Activated T-helper 1 cell treated with anti-CD3 and anti-CD28 coated beads, Interleukin-12 subunit alpha, Interleukin-12 subunit beta, Interleukin-2, Interleukin-4 antibody, amounts not matched to agents 30 ng/mL and 10 ng/mL and 1 ng/mL, durations not matched to agents 14 hours and 24 hours and 36 hours (primary cell): ENCODE measurements at regions of chr14 and their contacts with region 1.

Region 1: GRCh38 chr14:72023722-72024407 is 91.6 kb downstream of the RGS6 start:
- DNase-seq: peak; percentile 38
- H3K4me3 Mint-ChIP-seq: peak overlapping the region; percentile 28
- H3K27ac Mint-ChIP-seq: no peak overlapping the region
- H3K4me1 Mint-ChIP-seq: peaks cover 13% of the 10 kb centered on the region
- H3K27me3 Mint-ChIP-seq: peaks cover 17% of the 10 kb centered on the region

Region 2: GRCh38 chr14:72094844-72095582 is 71.1 kb after region 1 on chr14:
- intact Hi-C with region 1: loop called (anchors 2 kb)
- DNase-seq: no peak
- H3K4me3 Mint-ChIP-seq: no peak overlapping the region
- H3K27ac Mint-ChIP-seq: no peak overlapping the region
- H3K4me1 Mint-ChIP-seq: peaks cover 11% of the 10 kb centered on the region
- H3K27me3 Mint-ChIP-seq: peaks cover 5% of the 10 kb centered on the region

Region 3: GRCh38 chr14:72291908-72292688 is 268.2 kb after region 1 on chr14:
- intact Hi-C with region 1: loop called (anchors 1 kb)
- DNase-seq: no peak
- H3K4me3 Mint-ChIP-seq: no peak overlapping the region
- H3K27ac Mint-ChIP-seq: no peak overlapping the region
- H3K4me1 Mint-ChIP-seq: no peaks in the 10 kb centered on the region
- H3K27me3 Mint-ChIP-seq: peaks cover 8% of the 10 kb centered on the region